Caco-2 (cell line): ENCODE measurements at regions of chr9 and their contacts with region 1.

Region 1: GRCh38 chr9:6592231-6592630 is 53.3 kb downstream of the GLDC start:
- DNase-seq: peak; percentile 78 to 86
- H3K4me3 ChIP-seq: no peak overlapping the region
- H3K4me3 Mint-ChIP-seq: peak overlapping the region; percentile 30
- H3K27ac Mint-ChIP-seq: peak overlapping the region; percentile 71
- H3K4me1 ChIP-seq: peaks cover 46% of the 10 kb centered on the region
- H3K4me1 Mint-ChIP-seq: peaks cover 58% of the 10 kb centered on the region
- H3K27me3 ChIP-seq: no peaks in the 10 kb centered on the region
- H3K27me3 Mint-ChIP-seq: no peaks in the 10 kb centered on the region
- CTCF ChIP-seq: no peak

Region 2: GRCh38 chr9:6645355-6646292 is 53.4 kb after region 1 on chr9 and contains the start of gene GLDC:
- CTCF ChIA-PET with region 1: interaction called, 3 read pairs
- POLR2A ChIA-PET with region 1: interaction called, 4 read pairs
- intact Hi-C with region 1: loop called (anchors 1 kb)
- DNase-seq: peak; percentile 91 to 94
- H3K4me3 ChIP-seq: peak within 1 kb of the TSS; percentile 70
- H3K4me3 Mint-ChIP-seq: peak within 1 kb of the TSS; percentile 92
- H3K27ac Mint-ChIP-seq: peak within 1 kb of the TSS; percentile 88
- H3K4me1 ChIP-seq: peaks cover 31% of the 10 kb centered on the region
- H3K4me1 Mint-ChIP-seq: peaks cover 28% of the 10 kb centered on the region
- H3K27me3 ChIP-seq: no peaks in the 10 kb centered on the region
- H3K27me3 Mint-ChIP-seq: no peaks in the 10 kb centered on the region
- CTCF ChIP-seq: no peak
- total RNA-seq, gene GLDC: 276 and 320 TPM in 2 replicates